Transverse colon (tissue), 4 donors: ENCODE measurements at regions of chr5 and their contacts with region 1.

Region 1: GRCh38 chr5:147188200-147189108 is 46.4 kb upstream of the STK32A start:
- DNase-seq: peak; percentile 18
- H3K4me3 ChIP-seq: no peak overlapping the region
- H3K27ac ChIP-seq: no peak overlapping the region
- H3K4me1 ChIP-seq: no peaks in the 10 kb centered on the region
- H3K27me3 ChIP-seq: peaks cover 4% of the 10 kb centered on the region
- CTCF ChIP-seq: peak; percentile 84 to 90 (median 89)
- EP300 ChIP-seq: no peak
- POLR2A ChIP-seq: no peak

Region 2: DNA sequence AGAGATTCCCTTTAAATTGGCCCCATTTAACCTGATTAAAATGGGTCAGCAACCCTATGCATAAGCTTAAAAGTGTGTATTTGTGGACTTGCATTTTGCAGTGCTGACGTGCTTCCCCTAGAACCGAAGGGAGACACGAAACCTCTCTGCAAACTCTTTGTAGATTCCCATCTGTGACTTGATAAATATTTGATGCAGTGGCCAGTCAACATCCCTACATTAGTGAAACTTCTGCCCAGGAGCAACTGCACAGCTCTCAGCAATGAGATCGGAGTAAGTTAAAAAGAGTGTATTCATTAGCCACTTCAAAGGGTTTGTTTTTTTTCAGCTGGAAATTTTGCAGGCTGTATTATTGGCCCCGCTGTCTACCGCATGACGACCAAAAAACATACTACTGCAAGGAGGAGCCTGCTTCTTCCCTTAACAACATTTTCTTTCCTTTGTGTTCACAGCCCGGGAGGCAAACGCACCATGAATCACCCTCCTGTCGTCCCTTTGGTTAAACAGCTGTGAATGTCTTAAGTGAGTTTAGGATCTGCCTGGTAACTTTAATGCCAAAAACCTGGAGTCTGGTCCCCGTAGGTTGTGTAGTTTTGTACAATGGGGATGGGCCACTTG is 779.3 kb before region 1 on chr5:
- in situ Hi-C with region 1: no loop called
- intact Hi-C with region 1: loop called (anchors 10 kb)
- DNase-seq: no peak
- H3K4me3 ChIP-seq: no peak overlapping the region
- H3K27ac ChIP-seq: no peak overlapping the region
- H3K4me1 ChIP-seq: no peaks in the 10 kb centered on the region
- H3K27me3 ChIP-seq: peaks cover 3% of the 10 kb centered on the region
- CTCF ChIP-seq: no peak
- EP300 ChIP-seq: no peak
- POLR2A ChIP-seq: no peak

Region 3: DNA sequence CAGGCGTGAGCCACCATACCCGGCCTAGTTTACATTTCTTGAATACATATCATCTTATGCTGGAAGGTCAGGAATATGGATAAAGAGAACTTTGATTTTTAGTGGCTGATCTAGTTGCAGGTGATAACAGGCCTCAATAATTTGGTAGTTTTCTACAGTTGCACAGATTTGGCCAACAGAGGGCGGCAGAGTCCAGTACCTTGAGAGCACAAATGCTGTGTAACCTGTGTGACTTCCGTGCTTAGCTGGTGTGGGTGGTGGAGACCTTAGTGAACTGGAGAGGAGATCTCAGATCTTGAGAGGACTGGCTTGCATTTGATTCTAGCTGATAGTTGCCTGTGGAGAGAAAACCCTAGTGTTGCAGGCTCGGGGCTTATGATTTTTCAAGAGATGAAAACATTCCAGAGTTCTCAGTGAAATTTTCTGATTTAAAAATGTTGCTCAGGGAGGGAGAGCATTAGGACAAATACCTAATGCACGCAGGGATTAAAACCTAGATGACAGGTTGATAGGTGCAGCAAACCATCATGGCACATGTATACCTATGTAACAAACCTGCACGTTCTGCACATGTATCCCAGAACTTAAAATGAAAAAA is 655.1 kb before region 1 on chr5:
- in situ Hi-C with region 1: loop called (anchors 25 kb)
- intact Hi-C with region 1: no loop called
- DNase-seq: peak; percentile 73
- H3K4me3 ChIP-seq: no peak overlapping the region
- H3K27ac ChIP-seq: no peak overlapping the region
- H3K4me1 ChIP-seq: no peaks in the 10 kb centered on the region
- H3K27me3 ChIP-seq: no peaks in the 10 kb centered on the region
- CTCF ChIP-seq: peak; percentile 61 to 76 (median 71)
- EP300 ChIP-seq: no peak
- POLR2A ChIP-seq: no peak